ENCODE measurements at regions of chr5 and their contacts with region 1.

Region 1: DNA sequence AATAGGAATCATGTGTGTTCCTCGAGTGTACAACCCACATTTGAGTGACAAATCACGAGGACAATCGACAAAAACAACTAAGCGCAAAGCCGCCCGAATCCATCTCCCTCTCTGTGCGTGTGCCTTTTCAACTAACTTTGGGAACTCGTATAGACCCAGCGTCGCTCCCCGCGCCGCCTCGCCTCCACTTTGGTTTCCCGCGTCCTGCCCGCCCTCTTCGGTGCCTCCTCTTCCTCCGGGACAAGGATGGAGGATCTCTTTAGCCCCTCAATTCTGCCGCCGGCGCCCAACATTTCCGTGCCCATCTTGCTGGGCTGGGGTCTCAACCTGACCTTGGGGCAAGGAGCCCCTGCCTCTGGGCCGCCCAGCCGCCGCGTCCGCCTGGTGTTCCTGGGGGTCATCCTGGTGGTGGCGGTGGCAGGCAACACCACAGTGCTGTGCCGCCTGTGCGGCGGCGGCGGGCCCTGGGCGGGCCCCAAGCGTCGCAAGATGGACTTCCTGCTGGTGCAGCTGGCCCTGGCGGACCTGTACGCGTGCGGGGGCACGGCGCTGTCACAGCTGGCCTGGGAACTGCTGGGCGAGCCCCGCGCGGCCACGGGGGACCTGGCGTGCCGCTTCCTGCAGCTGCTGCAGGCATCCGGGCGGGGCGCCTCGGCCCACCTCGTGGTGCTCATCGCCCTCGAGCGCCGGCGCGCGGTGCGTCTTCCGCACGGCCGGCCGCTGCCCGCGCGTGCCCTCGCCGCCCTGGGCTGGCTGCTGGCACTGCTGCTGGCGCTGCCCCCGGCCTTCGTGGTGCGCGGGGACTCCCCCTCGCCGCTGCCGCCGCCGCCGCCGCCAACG is at the start of gene GPR150:
- DNase-seq: peak; percentile 69
- H3K4me3 Mint-ChIP-seq: peak within 1 kb of the TSS; percentile 82
- H3K27ac Mint-ChIP-seq: peak within 1 kb of the TSS; percentile 17
- H3K4me1 Mint-ChIP-seq: peaks cover 36% of the 10 kb centered on the region
- H3K27me3 Mint-ChIP-seq: no peaks in the 10 kb centered on the region
- total RNA-seq, gene GPR150: 0.64 to 0.94 TPM

Region 2: GRCh38 chr5:95283761-95284415 is 336.4 kb before region 1 on chr5:
- CTCF ChIA-PET with region 1: no interaction called
- intact Hi-C with region 1: loop called (anchors 10 kb)
- DNase-seq: peak; percentile 41
- H3K4me3 Mint-ChIP-seq: peak overlapping the region; percentile 45
- H3K27ac Mint-ChIP-seq: no peak overlapping the region
- H3K4me1 Mint-ChIP-seq: peaks cover 9% of the 10 kb centered on the region
- H3K27me3 Mint-ChIP-seq: peaks cover 33% of the 10 kb centered on the region

Region 3: GRCh38 chr5:95511606-95512005 is 108.6 kb before region 1 on chr5:
- CTCF ChIA-PET with region 1: no interaction called
- intact Hi-C with region 1: no loop called
- DNase-seq: no peak
- H3K4me3 Mint-ChIP-seq: no peak overlapping the region
- H3K27ac Mint-ChIP-seq: no peak overlapping the region
- H3K4me1 Mint-ChIP-seq: no peaks in the 10 kb centered on the region
- H3K27me3 Mint-ChIP-seq: no peaks in the 10 kb centered on the region

Region 4: GRCh38 chr5:95641741-95642220 is 21.5 kb after region 1 on chr5:
- CTCF ChIA-PET with region 1: interaction called, 10 read pairs
- intact Hi-C with region 1: loop called (anchors 1 kb)
- DNase-seq: no peak
- H3K4me3 Mint-ChIP-seq: no peak overlapping the region
- H3K27ac Mint-ChIP-seq: no peak overlapping the region
- H3K4me1 Mint-ChIP-seq: peaks cover 20% of the 10 kb centered on the region
- H3K27me3 Mint-ChIP-seq: no peaks in the 10 kb centered on the region

Measured in activated naive CD4-positive, alpha-beta T cell treated with anti-CD3 and anti-CD28 coated beads for 36 hours (primary cell).